ENCODE measurements at regions of chr1 and their contacts with region 1.

Region 1: DNA sequence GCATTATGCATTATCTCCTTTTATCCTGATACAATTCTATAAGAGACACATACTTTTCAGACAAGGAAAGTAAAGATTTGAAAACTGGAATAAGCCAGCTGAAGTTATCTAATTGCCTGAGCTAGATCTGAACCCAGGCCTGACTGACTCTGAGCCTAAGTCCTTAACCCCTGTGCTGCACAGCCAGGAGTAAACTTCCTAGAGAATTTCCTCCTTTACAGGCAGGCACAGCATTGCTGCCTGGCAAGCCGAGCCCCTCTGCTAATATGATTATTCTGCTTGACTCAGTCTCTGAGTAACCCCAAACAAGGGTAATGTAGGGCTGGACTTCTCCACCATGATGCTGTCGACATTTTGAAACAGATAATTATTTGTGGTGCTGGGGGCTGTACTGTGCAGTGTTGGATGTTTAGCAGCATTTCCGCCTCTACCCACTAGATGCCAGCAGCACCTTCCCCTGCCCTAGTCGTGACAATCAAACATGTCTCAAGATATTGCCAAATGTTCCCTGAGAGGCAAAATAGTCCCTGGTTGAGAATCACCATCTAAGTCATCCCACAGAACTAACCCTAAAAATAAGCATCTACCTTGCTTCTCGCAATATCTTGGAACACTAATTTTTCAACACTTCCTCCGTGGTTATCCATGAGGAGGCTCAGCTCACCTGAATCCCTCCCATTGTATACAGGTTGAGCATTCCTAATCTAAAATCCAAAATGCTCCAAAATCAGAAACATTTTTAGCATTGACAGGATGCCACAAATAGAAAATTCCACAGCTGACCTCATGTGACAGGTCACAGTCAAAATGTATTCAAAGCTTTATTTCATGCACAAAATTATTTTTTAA is 18.5 kb downstream of the CAMK1G start:
- DNase-seq: peak; percentile 78
- ATAC-seq: peak; percentile 86
- H3K4me3 ChIP-seq: no peak overlapping the region
- H3K27ac ChIP-seq: no peak overlapping the region
- H3K4me1 ChIP-seq: peaks cover 38% of the 10 kb centered on the region
- H3K27me3 ChIP-seq: no peaks in the 10 kb centered on the region
- CTCF ChIP-seq: peak; percentile 94

Region 2: GRCh38 chr1:209457401-209458125 is 144.5 kb before region 1 on chr1:
- CTCF ChIA-PET with region 1: no interaction called
- POLR2A ChIA-PET with region 1: no interaction called
- intact Hi-C with region 1: no loop called
- DNase-seq: no peak
- ATAC-seq: no peak
- H3K4me3 ChIP-seq: no peak overlapping the region
- H3K27ac ChIP-seq: no peak overlapping the region
- H3K4me1 ChIP-seq: no peaks in the 10 kb centered on the region
- H3K27me3 ChIP-seq: no peaks in the 10 kb centered on the region
- CTCF ChIP-seq: no peak

Region 3: GRCh38 chr1:209576798-209577197 is 25.2 kb before region 1 on chr1:
- CTCF ChIA-PET with region 1: interaction called, 3 read pairs
- POLR2A ChIA-PET with region 1: no interaction called
- intact Hi-C with region 1: loop called (anchors 1 kb)
- DNase-seq: peak; percentile 98
- ATAC-seq: peak; percentile 99
- H3K4me3 ChIP-seq: no peak overlapping the region
- H3K27ac ChIP-seq: no peak overlapping the region
- H3K4me1 ChIP-seq: peaks cover 12% of the 10 kb centered on the region
- H3K27me3 ChIP-seq: no peaks in the 10 kb centered on the region
- CTCF ChIP-seq: peak; percentile 99

Region 4: GRCh38 chr1:209585672-209586071 is 16.4 kb before region 1 on chr1:
- CTCF ChIA-PET with region 1: interaction called, 4 read pairs
- POLR2A ChIA-PET with region 1: no interaction called
- intact Hi-C with region 1: loop called (anchors 1 kb)
- DNase-seq: peak; percentile 68
- ATAC-seq: peak; percentile 72
- H3K4me3 ChIP-seq: peak overlapping the region; percentile 54
- H3K27ac ChIP-seq: no peak overlapping the region
- H3K4me1 ChIP-seq: peaks cover 47% of the 10 kb centered on the region
- H3K27me3 ChIP-seq: no peaks in the 10 kb centered on the region
- CTCF ChIP-seq: peak; percentile 47; the same call in 1 of the 2 replicates

Region 5: GRCh38 chr1:209620487-209620884 is 18.5 kb after region 1 on chr1:
- CTCF ChIA-PET with region 1: no interaction called
- POLR2A ChIA-PET with region 1: no interaction called
- intact Hi-C with region 1: loop called (anchors 2 kb)
- DNase-seq: no peak
- ATAC-seq: no peak
- H3K4me3 ChIP-seq: no peak overlapping the region
- H3K27ac ChIP-seq: no peak overlapping the region
- H3K4me1 ChIP-seq: no peaks in the 10 kb centered on the region
- H3K27me3 ChIP-seq: no peaks in the 10 kb centered on the region
- CTCF ChIP-seq: no peak

Region 6: GRCh38 chr1:209627732-209628196 is 25.7 kb after region 1 on chr1:
- CTCF ChIA-PET with region 1: interaction called, 3 read pairs
- POLR2A ChIA-PET with region 1: no interaction called
- intact Hi-C with region 1: loop called (anchors 1 kb)
- DNase-seq: peak; percentile 88
- ATAC-seq: peak; percentile 72
- H3K4me3 ChIP-seq: no peak overlapping the region
- H3K27ac ChIP-seq: no peak overlapping the region
- H3K4me1 ChIP-seq: no peaks in the 10 kb centered on the region
- H3K27me3 ChIP-seq: no peaks in the 10 kb centered on the region
- CTCF ChIP-seq: peak; percentile 98

Measured in PC-3 (cell line).